ENCODE measurements at regions of chr7 and their contacts with region 1.

Region 1: DNA sequence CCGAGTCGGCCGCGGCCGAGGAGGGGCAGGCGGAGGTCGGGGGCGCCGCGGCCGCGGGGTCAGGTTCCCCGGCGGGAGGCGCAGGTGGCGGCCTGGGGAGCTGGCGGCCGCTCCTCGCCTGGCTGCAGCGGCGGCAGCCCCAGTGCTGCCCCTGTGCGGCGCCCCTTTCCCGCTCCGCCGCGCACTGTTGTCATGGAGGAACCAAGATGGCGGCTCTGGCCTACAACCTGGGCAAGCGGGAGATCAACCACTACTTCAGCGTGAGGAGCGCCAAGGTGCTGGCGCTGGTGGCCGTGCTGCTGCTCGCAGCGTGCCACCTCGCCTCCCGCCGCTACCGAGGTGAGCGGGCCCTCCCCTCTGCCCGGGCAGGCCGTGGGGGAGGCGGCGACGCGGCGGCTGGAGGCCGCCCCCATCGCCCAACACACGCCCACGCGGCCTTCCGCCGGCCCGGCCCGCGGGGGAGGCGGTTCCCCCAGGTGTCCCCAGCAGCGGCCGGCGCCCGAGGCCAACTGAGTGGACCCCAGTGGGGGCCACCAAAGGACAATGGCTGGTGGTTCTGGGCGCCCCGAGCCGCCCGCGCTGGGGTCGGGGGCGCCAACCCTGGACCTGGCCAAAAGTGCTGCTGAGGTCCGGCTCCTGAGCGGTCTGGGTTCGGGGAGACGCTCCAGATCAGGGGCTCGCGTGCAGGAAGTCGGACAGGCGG is 421 bp downstream of the CASD1 start:
- DNase-seq: peak; percentile 76
- ATAC-seq: peak; percentile 78
- H3K4me3 Mint-ChIP-seq: peak overlapping the region; percentile 80
- H3K27ac Mint-ChIP-seq: peak overlapping the region; percentile 95
- H3K4me1 Mint-ChIP-seq: peaks cover 40% of the 10 kb centered on the region
- H3K27me3 Mint-ChIP-seq: no peaks in the 10 kb centered on the region
- CTCF ChIP-seq: no peak

Region 2: GRCh38 chr7:94355454-94355853 is 154.6 kb before region 1 on chr7:
- CTCF ChIA-PET with region 1: no interaction called
- POLR2A ChIA-PET with region 1: no interaction called
- intact Hi-C with region 1: no loop called
- DNase-seq: no peak
- ATAC-seq: no peak
- H3K4me3 Mint-ChIP-seq: no peak overlapping the region
- H3K27ac Mint-ChIP-seq: no peak overlapping the region
- H3K4me1 Mint-ChIP-seq: no peaks in the 10 kb centered on the region
- H3K27me3 Mint-ChIP-seq: peaks cover 9% of the 10 kb centered on the region
- CTCF ChIP-seq: no peak

Region 3: DNA sequence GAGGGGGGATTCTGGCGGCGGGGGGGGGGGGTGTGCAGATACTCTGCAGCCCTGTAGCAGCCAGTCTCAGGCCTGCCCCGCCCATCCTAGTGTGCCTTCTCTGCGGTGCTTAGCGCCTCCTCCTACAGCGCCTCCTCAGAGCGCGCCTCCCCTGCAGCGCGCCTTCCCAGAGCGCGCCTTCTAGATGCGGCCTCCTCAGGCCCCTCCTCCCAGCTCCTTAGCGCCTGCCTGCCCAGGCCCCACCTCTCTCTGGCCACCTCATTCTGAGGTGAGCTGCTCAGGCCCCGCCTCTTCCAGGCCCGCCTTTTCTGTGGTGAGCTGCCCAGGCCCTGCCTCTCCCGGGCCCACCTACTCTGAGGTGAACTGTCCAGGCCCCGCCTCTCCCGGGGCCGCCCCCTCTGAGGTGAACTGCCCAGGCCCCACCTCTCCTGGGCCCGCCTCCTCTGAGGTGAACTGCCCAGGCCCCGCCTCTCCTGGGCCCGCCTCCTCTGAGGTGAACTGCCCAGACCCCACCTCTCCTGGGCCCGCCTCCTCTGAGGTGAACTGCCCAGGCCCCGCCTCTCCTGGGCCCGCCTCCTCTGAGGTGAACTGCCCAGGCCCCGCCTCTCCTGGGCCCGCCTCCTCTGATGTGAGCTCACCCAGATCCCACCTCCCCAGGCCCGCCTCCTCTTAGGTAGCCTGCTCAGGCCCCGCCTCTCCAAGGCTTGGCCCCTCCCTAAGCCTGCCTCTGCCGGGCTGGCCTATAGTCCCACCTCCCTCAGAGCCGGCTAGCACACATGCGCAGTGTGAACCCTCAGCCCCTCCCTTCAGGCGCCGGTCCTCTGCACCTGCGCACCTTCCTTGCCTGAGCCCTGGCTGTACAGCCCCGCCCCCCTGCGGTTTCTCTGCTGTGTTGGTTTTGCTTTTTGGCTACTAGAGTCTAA is 148.0 kb after region 1 on chr7:
- CTCF ChIA-PET with region 1: no interaction called
- POLR2A ChIA-PET with region 1: no interaction called
- intact Hi-C with region 1: loop called (anchors 10 kb)
- DNase-seq: peak; percentile 95
- ATAC-seq: peak; percentile 87
- H3K4me3 Mint-ChIP-seq: peak overlapping the region; percentile 81
- H3K27ac Mint-ChIP-seq: no peak overlapping the region
- H3K4me1 Mint-ChIP-seq: peaks cover 15% of the 10 kb centered on the region
- H3K27me3 Mint-ChIP-seq: peaks cover 23% of the 10 kb centered on the region
- CTCF ChIP-seq: no peak